ENCODE measurements at regions of chrX and their contacts with region 1.

Region 1: DNA sequence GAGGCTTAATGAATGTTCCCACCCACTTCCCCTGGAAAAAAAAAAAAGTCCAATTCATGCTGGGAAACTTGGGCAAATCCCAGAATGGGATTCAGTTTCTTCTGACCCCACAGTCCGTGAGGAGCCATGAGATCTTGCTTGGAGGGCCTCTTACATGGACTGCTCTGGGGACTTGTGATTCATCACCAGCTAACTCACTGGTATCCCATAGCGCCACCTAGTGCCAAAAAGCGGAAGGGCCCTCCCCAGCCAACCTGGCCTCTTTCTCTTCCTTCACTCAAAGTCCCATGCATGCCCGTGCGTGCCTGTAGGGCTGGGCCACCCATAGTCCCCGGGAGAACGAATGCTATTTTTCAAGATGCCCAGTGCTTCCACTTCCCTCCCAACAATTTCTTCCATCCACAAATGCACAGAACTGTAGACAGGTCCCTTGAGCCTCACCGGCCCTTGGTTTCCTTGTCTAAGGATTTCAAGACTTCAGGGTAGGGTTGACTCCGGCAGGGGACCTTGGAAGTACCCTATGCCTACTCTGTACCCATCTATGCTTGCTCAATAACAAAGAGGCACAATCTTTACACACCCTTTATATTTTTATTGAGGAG is 5.1 kb downstream of the RTL5 start:
- DNase-seq: peak; percentile 64 to 91 (median 81)
- ATAC-seq: peak; percentile 76
- H3K4me3 ChIP-seq: no peak overlapping the region
- H3K4me3 Mint-ChIP-seq: no peak overlapping the region
- H3K27ac ChIP-seq: no peak overlapping the region
- H3K27ac Mint-ChIP-seq: no peak overlapping the region
- H3K4me1 ChIP-seq: peaks cover 5% of the 10 kb centered on the region
- H3K4me1 Mint-ChIP-seq: peaks cover 25% of the 10 kb centered on the region
- H3K27me3 ChIP-seq: no peaks in the 10 kb centered on the region
- H3K27me3 Mint-ChIP-seq: peaks cover 13% of the 10 kb centered on the region
- CTCF ChIP-seq: peak; percentile 43

Region 2: GRCh38 chrX:71606536-71607216 is 520.0 kb before region 1 on chrX:
- CTCF ChIA-PET with region 1: no interaction called
- POLR2A ChIA-PET with region 1: no interaction called
- intact Hi-C with region 1: no loop called
- DNase-seq: peak in 8 of 9 experiments; percentile 19 to 84 (median 61)
- ATAC-seq: peak; percentile 84
- H3K4me3 ChIP-seq: no peak overlapping the region
- H3K4me3 Mint-ChIP-seq: peak overlapping the region; percentile 53
- H3K27ac ChIP-seq: peak overlapping the region; percentile 61 to 69
- H3K27ac Mint-ChIP-seq: peak overlapping the region; percentile 91
- H3K4me1 ChIP-seq: peaks cover 52% of the 10 kb centered on the region
- H3K4me1 Mint-ChIP-seq: peaks cover 70% of the 10 kb centered on the region
- H3K27me3 ChIP-seq: no peaks in the 10 kb centered on the region
- H3K27me3 Mint-ChIP-seq: no peaks in the 10 kb centered on the region
- CTCF ChIP-seq: no peak

Region 3: GRCh38 chrX:71859637-71860036 is 267.0 kb before region 1 on chrX:
- CTCF ChIA-PET with region 1: no interaction called
- POLR2A ChIA-PET with region 1: no interaction called
- intact Hi-C with region 1: loop called in 1 of 2 experiments (anchors 10 kb)
- DNase-seq: peak in 7 of 9 experiments; percentile 3 to 59 (median 34)
- ATAC-seq: peak; percentile 38
- H3K4me3 ChIP-seq: no peak overlapping the region
- H3K4me3 Mint-ChIP-seq: no peak overlapping the region
- H3K27ac ChIP-seq: no peak overlapping the region
- H3K27ac Mint-ChIP-seq: no peak overlapping the region
- H3K4me1 ChIP-seq: no peaks in the 10 kb centered on the region
- H3K4me1 Mint-ChIP-seq: peaks cover 2% of the 10 kb centered on the region
- H3K27me3 ChIP-seq: no peaks in the 10 kb centered on the region
- H3K27me3 Mint-ChIP-seq: no peaks in the 10 kb centered on the region
- CTCF ChIP-seq: peak; percentile 50

Region 4: GRCh38 chrX:71998836-71999509 is 127.7 kb before region 1 on chrX:
- CTCF ChIA-PET with region 1: interaction called, 38 read pairs
- POLR2A ChIA-PET with region 1: no interaction called
- intact Hi-C with region 1: loop called (anchors 1 kb)
- DNase-seq: peak in 7 of 9 experiments; percentile 14 to 60 (median 49)
- ATAC-seq: peak; percentile 55
- H3K4me3 ChIP-seq: no peak overlapping the region
- H3K4me3 Mint-ChIP-seq: no peak overlapping the region
- H3K27ac ChIP-seq: no peak overlapping the region
- H3K27ac Mint-ChIP-seq: no peak overlapping the region
- H3K4me1 ChIP-seq: no peaks in the 10 kb centered on the region
- H3K4me1 Mint-ChIP-seq: peaks cover 7% of the 10 kb centered on the region
- H3K27me3 ChIP-seq: no peaks in the 10 kb centered on the region
- H3K27me3 Mint-ChIP-seq: peaks cover 5% of the 10 kb centered on the region
- CTCF ChIP-seq: peak; percentile 59

Region 5: DNA sequence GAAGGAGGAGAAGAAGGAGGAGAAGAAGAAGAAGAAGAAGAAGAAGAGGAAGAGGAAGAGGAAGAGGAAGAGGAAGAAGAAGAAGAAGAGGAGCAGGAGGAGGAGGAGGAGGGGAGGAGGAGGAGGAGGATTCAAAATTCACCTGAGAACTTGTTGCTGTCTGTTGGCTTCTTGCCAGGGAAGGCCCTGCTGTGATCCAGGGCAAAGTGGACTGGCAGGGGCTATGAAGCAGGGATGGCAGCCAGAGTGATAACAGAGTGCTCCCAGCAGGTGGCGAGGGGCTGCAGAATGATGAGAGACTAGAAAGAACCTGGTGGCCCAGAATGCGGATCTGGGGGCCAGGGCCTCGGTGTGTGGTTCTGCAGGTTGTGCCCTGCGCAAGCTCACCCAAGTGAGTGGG is 77.7 kb before region 1 on chrX:
- CTCF ChIA-PET with region 1: interaction called, 6 read pairs
- POLR2A ChIA-PET with region 1: no interaction called
- intact Hi-C with region 1: loop called (anchors 2 kb)
- DNase-seq: peak in 4 of 9 experiments; percentile 14 to 49 (median 30)
- ATAC-seq: no peak
- H3K4me3 ChIP-seq: no peak overlapping the region
- H3K4me3 Mint-ChIP-seq: no peak overlapping the region
- H3K27ac ChIP-seq: no peak overlapping the region
- H3K27ac Mint-ChIP-seq: no peak overlapping the region
- H3K4me1 ChIP-seq: peaks cover 9% of the 10 kb centered on the region
- H3K4me1 Mint-ChIP-seq: peaks cover 12% of the 10 kb centered on the region
- H3K27me3 ChIP-seq: no peaks in the 10 kb centered on the region
- H3K27me3 Mint-ChIP-seq: no peaks in the 10 kb centered on the region
- CTCF ChIP-seq: no peak

Region 6: DNA sequence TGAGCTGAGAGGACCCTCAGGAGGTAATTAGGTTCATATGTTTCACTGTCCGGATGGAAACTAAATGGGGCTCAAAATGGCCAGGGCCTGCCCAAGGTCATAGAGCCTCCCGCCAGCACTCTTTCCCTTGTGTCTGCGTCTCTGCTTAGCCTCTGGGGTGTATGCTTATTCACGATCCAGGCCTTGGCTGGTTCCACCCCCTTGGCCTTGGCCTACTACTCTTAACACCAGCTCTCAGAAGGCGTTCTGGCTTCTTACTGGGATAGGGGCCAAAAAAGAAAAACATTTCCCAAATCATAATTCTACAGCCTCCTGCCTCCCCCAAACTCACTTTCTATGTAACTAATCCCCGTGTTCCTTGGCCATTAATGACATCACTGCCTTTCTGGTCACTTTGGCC is 63.7 kb before region 1 on chrX:
- CTCF ChIA-PET with region 1: no interaction called
- POLR2A ChIA-PET with region 1: no interaction called
- intact Hi-C with region 1: no loop called
- DNase-seq: no peak
- ATAC-seq: no peak
- H3K4me3 ChIP-seq: no peak overlapping the region
- H3K4me3 Mint-ChIP-seq: no peak overlapping the region
- H3K27ac ChIP-seq: no peak overlapping the region
- H3K27ac Mint-ChIP-seq: no peak overlapping the region
- H3K4me1 ChIP-seq: no peaks in the 10 kb centered on the region
- H3K4me1 Mint-ChIP-seq: peaks cover under 1% of the 10 kb centered on the region
- H3K27me3 ChIP-seq: no peaks in the 10 kb centered on the region
- H3K27me3 Mint-ChIP-seq: peaks cover 30% of the 10 kb centered on the region
- CTCF ChIP-seq: no peak

Region 7: DNA sequence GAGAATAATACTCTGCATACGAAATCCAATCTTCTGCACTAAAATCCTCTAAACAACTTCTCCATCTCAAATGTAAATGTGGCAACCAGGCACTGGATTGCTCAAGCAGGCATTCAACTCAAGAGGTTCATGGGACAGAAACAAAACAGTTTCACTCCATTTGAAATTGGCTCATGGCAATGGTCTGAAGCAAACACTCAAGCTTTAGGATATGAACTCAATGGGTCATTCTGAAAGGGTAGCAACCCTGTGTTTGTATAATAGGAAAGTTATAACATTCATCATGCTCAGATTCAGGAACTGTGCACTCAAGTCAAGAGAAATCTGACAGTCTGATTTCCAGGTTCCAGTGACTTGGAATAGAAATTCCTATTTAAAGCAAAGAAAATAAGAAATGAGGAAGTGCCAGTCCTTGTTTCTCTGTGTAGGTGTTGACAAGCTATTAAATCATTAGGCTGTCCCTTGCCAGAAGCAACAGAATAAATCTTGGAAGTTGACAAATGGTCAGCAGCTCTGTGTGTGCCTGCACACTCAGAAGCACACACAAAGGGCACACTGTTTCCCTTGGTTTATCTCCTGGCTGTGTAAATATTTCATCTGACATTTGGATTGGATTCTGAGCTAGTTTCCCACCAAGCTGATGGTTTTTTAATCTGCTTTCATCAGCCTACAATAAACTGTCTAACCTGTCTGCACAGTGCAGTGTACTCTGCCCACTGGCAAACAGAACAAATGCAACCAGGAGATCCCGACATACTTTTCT is 255.0 kb after region 1 on chrX:
- CTCF ChIA-PET with region 1: no interaction called
- POLR2A ChIA-PET with region 1: no interaction called
- intact Hi-C with region 1: no loop called
- DNase-seq: no peak
- ATAC-seq: no peak
- H3K4me3 ChIP-seq: no peak overlapping the region
- H3K4me3 Mint-ChIP-seq: no peak overlapping the region
- H3K27ac ChIP-seq: no peak overlapping the region
- H3K27ac Mint-ChIP-seq: no peak overlapping the region
- H3K4me1 ChIP-seq: no peaks in the 10 kb centered on the region
- H3K4me1 Mint-ChIP-seq: no peaks in the 10 kb centered on the region
- H3K27me3 ChIP-seq: no peaks in the 10 kb centered on the region
- H3K27me3 Mint-ChIP-seq: no peaks in the 10 kb centered on the region
- CTCF ChIP-seq: no peak

Region 8: DNA sequence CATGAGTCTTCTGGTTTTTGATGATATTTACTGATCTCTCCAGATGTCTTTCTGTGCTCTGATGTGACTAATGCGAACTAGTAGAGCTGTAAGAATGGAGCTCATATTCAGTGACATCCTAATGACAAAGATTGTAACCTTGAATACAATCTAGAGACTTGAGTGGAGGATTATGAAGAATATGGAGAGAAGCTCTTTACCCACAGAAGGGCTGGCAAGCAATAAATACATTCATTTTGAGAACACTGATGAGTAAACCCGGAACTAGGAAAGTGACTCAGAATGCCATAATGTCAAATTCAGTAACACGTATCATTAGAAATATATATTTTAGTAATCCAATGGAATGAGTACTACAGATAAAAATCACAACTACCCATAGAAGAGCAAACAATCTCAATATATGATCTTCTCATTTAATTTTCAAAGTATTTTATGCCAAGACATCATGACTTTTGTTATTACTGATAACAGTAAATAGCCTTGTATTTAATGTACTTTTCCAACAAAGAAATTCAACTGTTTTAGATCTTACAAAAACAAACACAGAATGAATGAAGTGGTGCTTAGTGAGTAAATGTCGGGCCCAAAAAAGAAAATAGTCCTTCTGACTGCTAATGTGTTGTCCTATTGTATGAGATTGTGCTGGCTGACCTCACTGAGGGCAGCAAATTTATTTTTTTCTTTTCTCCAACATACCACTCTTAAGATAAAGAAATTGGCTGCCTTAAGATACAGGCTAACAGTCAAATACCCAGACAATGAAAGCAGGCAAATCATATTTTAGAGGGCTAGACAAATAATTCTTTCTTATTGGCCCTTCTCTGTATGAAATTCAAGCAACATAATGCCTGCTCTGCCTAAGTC is 495.2 kb after region 1 on chrX:
- CTCF ChIA-PET with region 1: no interaction called
- POLR2A ChIA-PET with region 1: no interaction called
- intact Hi-C with region 1: no loop called
- DNase-seq: no peak
- ATAC-seq: no peak
- H3K4me3 ChIP-seq: no peak overlapping the region
- H3K4me3 Mint-ChIP-seq: no peak overlapping the region
- H3K27ac ChIP-seq: no peak overlapping the region
- H3K27ac Mint-ChIP-seq: no peak overlapping the region
- H3K4me1 ChIP-seq: no peaks in the 10 kb centered on the region
- H3K4me1 Mint-ChIP-seq: peaks cover 2% of the 10 kb centered on the region
- H3K27me3 ChIP-seq: no peaks in the 10 kb centered on the region
- H3K27me3 Mint-ChIP-seq: no peaks in the 10 kb centered on the region
- CTCF ChIP-seq: no peak

Measured in CD8-positive, alpha-beta T cell (primary cell).